Endothelial cell of umbilical vein (primary cell): ENCODE measurements at regions of chr2 and their contacts with region 1.

Region 1: DNA sequence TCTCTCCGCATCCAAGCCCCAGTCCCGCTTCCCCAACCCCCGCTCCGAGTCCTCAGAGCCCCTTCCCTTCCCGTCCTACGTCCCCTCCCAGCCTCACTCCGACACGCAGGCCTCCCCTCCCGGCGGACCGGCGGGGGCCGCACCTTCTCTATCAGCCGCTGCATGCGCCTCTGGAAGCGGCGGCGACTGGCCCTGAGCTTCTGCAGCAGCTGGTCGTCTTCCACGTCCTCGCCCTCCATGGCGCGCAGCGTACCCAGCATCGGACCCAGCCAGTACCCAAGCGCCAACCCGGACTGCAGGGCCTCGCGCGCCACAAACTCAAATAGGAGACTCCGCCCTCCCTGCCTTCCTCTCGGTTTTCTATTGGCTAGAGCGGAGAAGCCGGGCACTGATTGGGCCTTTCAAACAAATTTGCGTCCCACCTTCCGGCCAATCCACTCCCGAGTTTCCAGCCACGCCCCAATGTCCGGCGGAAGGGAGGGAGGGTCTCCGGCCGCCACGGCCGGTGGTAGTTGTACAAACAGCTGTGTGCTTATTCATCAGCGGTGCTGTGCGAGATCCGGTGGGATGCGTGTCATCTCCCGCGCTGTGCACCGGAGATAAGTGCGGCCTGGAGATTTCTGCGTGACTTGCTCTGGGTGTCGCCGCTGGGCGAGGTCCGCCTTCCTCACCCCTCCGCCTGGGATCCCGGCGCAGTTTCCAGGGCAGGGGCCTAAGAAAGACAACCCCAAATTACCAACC is at the start of gene HJURP:
- DNase-seq: peak; percentile 98
- H3K4me3 ChIP-seq: peak within 1 kb of the TSS; percentile 88 to 98 (median 89)
- H3K27ac ChIP-seq: peak within 1 kb of the TSS; percentile 73
- H3K4me1 ChIP-seq: peaks cover 20% of the 10 kb centered on the region
- H3K27me3 ChIP-seq: no peaks in the 10 kb centered on the region
- CTCF ChIP-seq: no peak
- POLR2A ChIP-seq: peak; percentile 68
- total RNA-seq, gene HJURP: 42.4 and 60.9 TPM in 2 replicates

Region 2: GRCh38 chr2:233353769-233354499 is 500.5 kb before region 1 on chr2 and contains the start of gene DGKD:
- CTCF ChIA-PET with region 1: no interaction called
- POLR2A ChIA-PET with region 1: no interaction called
- dilution Hi-C with region 1: no loop called
- intact Hi-C with region 1: loop called (anchors 10 kb)
- DNase-seq: peak; percentile 56
- H3K4me3 ChIP-seq: peak within 1 kb of the TSS; percentile 40 to 78 (median 59)
- H3K27ac ChIP-seq: peak within 1 kb of the TSS; percentile 19
- H3K4me1 ChIP-seq: peaks cover 23% of the 10 kb centered on the region
- H3K27me3 ChIP-seq: no peaks in the 10 kb centered on the region
- CTCF ChIP-seq: peak in 1 of 2 donors; percentile 26
- POLR2A ChIP-seq: no peak
- total RNA-seq, gene DGKD: 36.5 and 36.6 TPM in 2 replicates

Region 3: GRCh38 chr2:233832869-233833311 is 21.5 kb before region 1 on chr2:
- CTCF ChIA-PET with region 1: interaction called, 6 read pairs
- POLR2A ChIA-PET with region 1: no interaction called
- dilution Hi-C with region 1: no loop called
- intact Hi-C with region 1: loop called (anchors 1 kb)
- DNase-seq: peak; percentile 30
- H3K4me3 ChIP-seq: no peak overlapping the region
- H3K27ac ChIP-seq: no peak overlapping the region
- H3K4me1 ChIP-seq: no peaks in the 10 kb centered on the region
- H3K27me3 ChIP-seq: no peaks in the 10 kb centered on the region
- CTCF ChIP-seq: peak in 1 of 2 donors; percentile 42
- POLR2A ChIP-seq: no peak

Region 4: GRCh38 chr2:233867993-233868532 is 13.7 kb after region 1 on chr2 and contains the start of gene MSL3B:
- CTCF ChIA-PET with region 1: interaction called, 5 read pairs
- POLR2A ChIA-PET with region 1: no interaction called
- dilution Hi-C with region 1: no loop called
- intact Hi-C with region 1: loop called (anchors 1 kb)
- DNase-seq: peak; percentile 70
- H3K4me3 ChIP-seq: peak within 1 kb of the TSS; percentile 46 to 90 (median 75)
- H3K27ac ChIP-seq: peak within 1 kb of the TSS; percentile 71
- H3K4me1 ChIP-seq: peaks cover 5% of the 10 kb centered on the region
- H3K27me3 ChIP-seq: peaks cover 5 to 26% of the 10 kb centered on the region in 2 experiments
- CTCF ChIP-seq: no peak
- POLR2A ChIP-seq: peak; percentile 76

Region 5: GRCh38 chr2:233882353-233882752 is 27.9 kb after region 1 on chr2:
- CTCF ChIA-PET with region 1: no interaction called
- POLR2A ChIA-PET with region 1: no interaction called
- dilution Hi-C with region 1: no loop called
- intact Hi-C with region 1: no loop called
- DNase-seq: no peak
- H3K4me3 ChIP-seq: no peak overlapping the region
- H3K27ac ChIP-seq: no peak overlapping the region
- H3K4me1 ChIP-seq: no peaks in the 10 kb centered on the region
- H3K27me3 ChIP-seq: no peaks in the 10 kb centered on the region
- CTCF ChIP-seq: no peak
- POLR2A ChIP-seq: no peak